SK-N-SH (cell line): ENCODE measurements at regions of chr3 and their contacts with region 1.

Region 1: DNA sequence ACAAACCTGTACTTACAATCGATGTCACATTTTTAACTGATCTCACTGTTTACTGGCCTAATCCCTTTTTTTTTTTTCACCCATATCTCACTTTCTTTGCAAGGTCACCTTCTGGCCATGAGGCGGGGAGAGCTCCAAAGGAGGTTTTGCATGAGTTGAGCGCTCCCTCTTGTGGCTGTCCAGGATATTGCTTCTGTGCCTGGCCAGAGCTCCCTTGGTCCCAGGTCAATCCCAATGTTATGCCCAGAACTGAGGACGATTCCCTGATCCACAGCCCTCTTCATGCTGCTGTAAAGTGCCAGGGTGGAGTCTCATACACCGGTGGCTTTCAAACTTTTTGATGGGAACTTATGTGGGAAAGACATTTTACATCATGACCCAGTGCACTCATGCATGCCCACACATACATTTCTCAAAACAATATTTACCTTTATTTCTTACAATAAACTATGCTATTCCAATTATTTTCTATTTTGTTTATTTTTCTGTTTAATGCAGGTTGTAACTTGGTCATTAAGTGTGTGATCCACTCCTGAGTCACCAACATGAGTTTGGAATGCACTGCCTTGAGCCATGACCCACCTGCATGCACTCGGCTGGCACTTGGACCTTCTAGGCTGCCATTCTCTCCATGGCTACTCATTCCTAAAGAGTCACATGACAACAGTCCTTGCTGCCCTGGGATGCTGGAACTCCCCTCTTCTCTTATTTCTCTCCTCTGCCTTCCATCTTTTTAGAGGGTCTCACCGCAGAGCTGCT is 9.6 kb upstream of the SST start:
- DNase-seq: peak; percentile 65
- H3K4me3 ChIP-seq: peak overlapping the region in 1 of 2 experiments; percentile 16; a peak in 1 of 4 replicates
- H3K27ac ChIP-seq: no peak overlapping the region
- H3K4me1 ChIP-seq: no peaks in the 10 kb centered on the region
- H3K27me3 ChIP-seq: peaks cover 33% of the 10 kb centered on the region; the same call in 1 of the 2 replicates
- CTCF ChIP-seq: peak; percentile 89
- EP300 ChIP-seq: no peak
- RAD21 ChIP-seq: peak; percentile 86

Region 2: DNA sequence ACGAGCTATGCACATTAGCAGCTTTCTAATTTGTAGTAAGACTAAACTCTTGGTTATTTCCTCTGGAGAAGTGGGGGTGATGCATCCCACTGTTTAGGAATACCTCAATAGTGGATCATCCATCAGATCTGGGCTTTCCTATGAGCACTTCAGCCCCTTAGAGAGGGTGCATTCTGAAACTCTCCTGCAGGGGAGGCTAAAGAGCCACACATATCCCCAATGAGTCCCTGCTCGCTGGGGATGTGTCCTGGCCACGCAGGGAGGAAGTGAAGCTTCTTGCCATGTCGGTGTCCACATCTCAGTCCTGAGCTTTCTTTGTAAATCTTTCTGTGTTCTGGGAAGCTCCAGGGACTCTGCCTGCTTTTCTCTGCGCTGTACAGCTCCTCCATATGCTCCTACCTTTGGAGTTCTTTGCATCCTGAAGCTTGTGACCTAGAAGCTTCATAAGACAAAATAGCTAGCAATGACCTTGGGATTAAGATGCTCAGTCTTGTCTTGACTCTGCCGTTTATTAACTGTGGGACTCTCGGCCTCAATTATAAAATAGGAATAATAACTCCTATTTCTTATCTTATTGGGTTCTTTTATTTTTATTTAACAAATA is 360.0 kb before region 1 on chr3:
- CTCF ChIA-PET with region 1: interaction called, 192 read pairs
- POLR2A ChIA-PET with region 1: no interaction called
- DNase-seq: peak; percentile 29
- H3K4me3 ChIP-seq: peak overlapping the region in 1 of 2 experiments; percentile 48; a peak in 2 of 4 replicates
- H3K27ac ChIP-seq: no peak overlapping the region
- H3K4me1 ChIP-seq: no peaks in the 10 kb centered on the region; a peak in 1 of 4 replicates
- H3K27me3 ChIP-seq: peaks cover 21% of the 10 kb centered on the region; the same call in 1 of the 2 replicates
- CTCF ChIP-seq: peak; percentile 68
- EP300 ChIP-seq: no peak
- RAD21 ChIP-seq: peak; percentile 51

Region 3: DNA sequence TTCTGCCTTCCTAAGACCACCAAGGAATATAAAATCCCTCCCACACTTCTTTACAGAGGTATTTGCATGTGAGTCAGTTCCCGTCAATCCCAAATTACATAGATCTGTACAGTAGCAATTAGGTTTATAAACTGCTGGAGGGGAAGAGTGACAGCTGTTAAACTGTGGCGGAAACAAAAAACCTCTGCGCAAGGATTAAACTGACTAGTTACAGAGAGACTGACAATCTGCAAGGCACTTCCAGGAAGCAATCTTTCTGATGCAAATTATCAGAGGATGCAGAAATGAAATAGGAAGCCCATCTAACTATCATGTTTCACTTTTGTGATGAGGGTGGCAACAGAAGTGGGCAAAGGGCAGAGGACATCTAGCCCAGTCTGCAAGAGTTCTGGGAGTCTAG is 161.2 kb before region 1 on chr3:
- CTCF ChIA-PET with region 1: no interaction called
- POLR2A ChIA-PET with region 1: no interaction called
- DNase-seq: no peak
- H3K4me3 ChIP-seq: no peak overlapping the region
- H3K27ac ChIP-seq: no peak overlapping the region
- H3K4me1 ChIP-seq: no peaks in the 10 kb centered on the region; a peak in 1 of 4 replicates
- H3K27me3 ChIP-seq: no peaks in the 10 kb centered on the region
- CTCF ChIP-seq: no peak
- EP300 ChIP-seq: no peak
- RAD21 ChIP-seq: no peak

Region 4: DNA sequence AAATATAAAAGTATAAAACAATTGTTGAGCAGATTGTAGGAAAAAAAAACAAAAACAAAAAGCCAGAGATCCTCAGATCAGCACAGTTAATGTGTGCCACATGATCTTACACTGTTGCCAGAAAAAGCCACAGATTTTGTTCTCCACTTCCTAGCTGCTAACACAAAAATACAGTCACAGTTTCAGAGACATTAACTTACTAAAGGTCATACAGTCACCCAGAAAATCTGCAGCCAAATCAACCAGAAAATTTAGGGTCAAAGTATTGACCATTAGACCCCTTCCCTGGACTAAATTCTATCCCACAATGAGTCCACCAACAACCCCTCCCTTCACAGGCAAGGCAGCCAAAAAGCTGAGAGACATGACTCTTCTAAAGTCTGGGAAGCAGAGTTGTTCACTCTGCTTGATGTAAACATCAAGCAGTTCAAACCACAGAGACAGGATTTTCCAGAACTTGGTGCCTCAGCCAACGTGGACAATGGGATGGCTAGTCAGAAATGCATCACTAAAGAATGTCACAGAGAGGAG is 68.8 kb before region 1 on chr3:
- CTCF ChIA-PET with region 1: interaction called, 28 read pairs
- POLR2A ChIA-PET with region 1: no interaction called
- DNase-seq: no peak
- H3K4me3 ChIP-seq: no peak overlapping the region
- H3K27ac ChIP-seq: no peak overlapping the region
- H3K4me1 ChIP-seq: no peaks in the 10 kb centered on the region
- H3K27me3 ChIP-seq: no peaks in the 10 kb centered on the region; the same call in 1 of the 2 replicates
- CTCF ChIP-seq: no peak
- EP300 ChIP-seq: no peak
- RAD21 ChIP-seq: no peak

Region 5: GRCh38 chr3:187640569-187641059 is 39.2 kb before region 1 on chr3:
- CTCF ChIA-PET with region 1: interaction called, 11 read pairs
- POLR2A ChIA-PET with region 1: no interaction called
- DNase-seq: no peak
- H3K4me3 ChIP-seq: no peak overlapping the region
- H3K27ac ChIP-seq: no peak overlapping the region
- H3K4me1 ChIP-seq: no peaks in the 10 kb centered on the region
- H3K27me3 ChIP-seq: no peaks in the 10 kb centered on the region
- CTCF ChIP-seq: no peak
- EP300 ChIP-seq: no peak
- RAD21 ChIP-seq: no peak

Region 6: GRCh38 chr3:187694801-187695200 is 15.0 kb after region 1 on chr3:
- CTCF ChIA-PET with region 1: interaction called, 27 read pairs
- POLR2A ChIA-PET with region 1: no interaction called
- DNase-seq: no peak
- H3K4me3 ChIP-seq: no peak overlapping the region
- H3K27ac ChIP-seq: no peak overlapping the region
- H3K4me1 ChIP-seq: no peaks in the 10 kb centered on the region
- H3K27me3 ChIP-seq: peaks cover 36% of the 10 kb centered on the region; the same call in 1 of the 2 replicates
- CTCF ChIP-seq: no peak
- EP300 ChIP-seq: no peak
- RAD21 ChIP-seq: no peak

Region 7: GRCh38 chr3:187709155-187709554 is 29.3 kb after region 1 on chr3:
- CTCF ChIA-PET with region 1: interaction called, 15 read pairs
- POLR2A ChIA-PET with region 1: no interaction called
- DNase-seq: no peak
- H3K4me3 ChIP-seq: no peak overlapping the region
- H3K27ac ChIP-seq: no peak overlapping the region
- H3K4me1 ChIP-seq: no peaks in the 10 kb centered on the region
- H3K27me3 ChIP-seq: no peaks in the 10 kb centered on the region; the same call in 1 of the 2 replicates
- CTCF ChIP-seq: peak; percentile 30; the same call in 1 of the 2 replicates
- EP300 ChIP-seq: no peak
- RAD21 ChIP-seq: no peak